ENCODE measurements at regions of chr14 and their contacts with region 1.

Region 1: DNA sequence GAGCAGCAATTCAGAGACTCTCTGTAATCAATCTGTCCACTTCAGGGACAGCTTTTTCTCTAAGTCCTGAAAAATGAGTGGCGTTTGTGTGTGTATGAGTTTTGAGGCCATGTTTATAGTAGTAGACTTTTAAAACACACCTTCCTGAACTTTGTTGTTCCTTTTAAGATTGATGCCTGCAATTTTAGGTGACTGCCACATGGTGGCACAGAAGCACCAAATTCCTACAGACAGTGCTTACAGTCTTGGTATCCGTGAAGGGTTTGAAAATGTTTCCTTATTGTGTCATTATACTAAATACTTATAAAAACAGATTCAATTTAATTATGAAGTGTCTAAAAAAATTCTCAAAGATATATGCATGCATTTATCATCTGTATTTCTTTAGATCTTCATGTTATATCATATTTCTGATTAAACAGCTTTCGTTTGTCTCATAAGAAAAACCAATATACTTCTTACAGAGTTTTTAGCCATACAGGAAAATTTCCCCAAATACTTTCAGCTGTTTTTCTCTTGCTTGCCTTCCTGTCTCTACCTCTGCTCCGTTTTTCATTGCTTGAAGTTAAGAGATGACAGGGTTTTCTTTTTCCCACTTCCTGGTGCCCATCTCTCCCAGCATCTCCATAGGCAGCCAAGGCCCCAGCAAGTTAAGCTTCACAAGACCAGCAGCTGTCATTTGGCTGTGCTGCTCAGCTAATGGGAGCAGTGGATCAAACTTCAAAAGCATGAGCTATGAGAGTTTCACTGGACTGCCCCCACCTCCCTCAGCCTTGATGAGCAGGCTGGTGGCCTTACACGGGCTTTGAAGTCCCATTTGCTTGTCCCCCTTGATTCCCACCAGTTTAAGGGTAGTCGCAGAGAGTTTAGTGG is 259.6 kb downstream of the AKAP6 start:
- DNase-seq: peak; percentile 10 to 20 (median 16)
- ATAC-seq: peak; percentile 54; the same call in 2 of the 3 replicates
- H3K4me3 ChIP-seq: no peak overlapping the region
- H3K27ac ChIP-seq: no peak overlapping the region
- H3K4me1 ChIP-seq: no peaks in the 10 kb centered on the region
- H3K27me3 ChIP-seq: no peaks in the 10 kb centered on the region
- CTCF ChIP-seq: peak; percentile 40 to 62 (median 58)
- EP300 ChIP-seq: no peak
- POLR2A ChIP-seq: no peak
- RAD21 ChIP-seq: peak; percentile 61 to 70

Region 2: GRCh38 chr14:32710731-32711680 is 122.3 kb after region 1 on chr14:
- CTCF ChIA-PET with region 1: no interaction called
- POLR2A ChIA-PET with region 1: no interaction called
- in situ Hi-C with region 1: no loop called
- intact Hi-C with region 1: loop called (anchors 10 kb)
- DNase-seq: peak; percentile 18 to 28 (median 19)
- ATAC-seq: 0 out of 3 replicates have a peak, but pooled peaks have one; percentile 43
- H3K4me3 ChIP-seq: no peak overlapping the region
- H3K27ac ChIP-seq: no peak overlapping the region
- H3K4me1 ChIP-seq: no peaks in the 10 kb centered on the region
- H3K27me3 ChIP-seq: no peaks in the 10 kb centered on the region; a peak in 1 of 5 replicates
- CTCF ChIP-seq: peak; percentile 14 to 54 (median 35); a peak in 3 of 6 replicates
- EP300 ChIP-seq: no peak
- POLR2A ChIP-seq: no peak
- RAD21 ChIP-seq: peak; percentile 29 to 64; a peak in 3 of 4 replicates

Region 3: DNA sequence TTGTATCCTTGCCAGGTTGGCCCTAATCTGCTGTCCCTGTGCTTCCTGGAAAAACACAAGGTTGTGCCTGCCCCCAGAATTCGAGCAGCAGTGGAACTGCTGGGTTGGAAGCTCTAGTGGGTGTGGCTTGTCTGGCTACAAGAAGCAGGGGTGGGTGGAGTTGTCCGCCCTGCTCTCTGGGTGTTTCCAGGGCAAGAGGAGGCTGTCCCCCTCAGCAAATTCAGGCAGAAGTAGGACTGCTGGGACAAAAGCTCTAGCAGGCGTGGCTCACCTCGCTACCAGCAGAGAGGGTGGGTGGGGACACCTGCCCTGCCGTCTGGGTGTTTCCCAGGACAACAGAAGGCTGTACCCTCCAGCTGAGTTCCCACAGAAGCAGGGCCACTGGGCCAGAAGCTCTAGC is 277.2 kb after region 1 on chr14:
- CTCF ChIA-PET with region 1: no interaction called
- POLR2A ChIA-PET with region 1: no interaction called
- in situ Hi-C with region 1: no loop called
- intact Hi-C with region 1: no loop called
- DNase-seq: no peak
- ATAC-seq: no peak
- H3K4me3 ChIP-seq: no peak overlapping the region
- H3K27ac ChIP-seq: no peak overlapping the region
- H3K4me1 ChIP-seq: no peaks in the 10 kb centered on the region
- H3K27me3 ChIP-seq: no peaks in the 10 kb centered on the region
- CTCF ChIP-seq: no peak
- EP300 ChIP-seq: no peak
- POLR2A ChIP-seq: no peak
- RAD21 ChIP-seq: no peak

Region 4: DNA sequence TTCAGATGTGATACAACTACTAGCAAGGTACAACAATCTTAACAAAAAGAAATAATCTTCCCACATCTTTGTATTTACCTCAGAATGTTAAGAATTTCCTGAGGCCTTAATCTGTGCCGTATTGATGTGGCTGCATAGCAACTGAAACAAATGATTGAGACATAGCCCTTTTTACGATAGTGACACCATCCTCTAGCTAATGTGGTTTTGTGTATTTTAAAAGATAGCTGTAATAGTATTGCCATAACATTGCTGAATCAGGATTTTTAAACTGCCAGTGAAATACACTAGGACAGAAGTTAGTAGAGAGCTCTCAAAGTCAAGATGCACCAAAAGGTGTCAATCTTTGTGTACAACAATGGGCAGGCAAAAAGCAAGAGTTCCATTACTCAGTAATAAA is 361.9 kb after region 1 on chr14:
- CTCF ChIA-PET with region 1: no interaction called
- POLR2A ChIA-PET with region 1: no interaction called
- in situ Hi-C with region 1: no loop called
- intact Hi-C with region 1: no loop called
- DNase-seq: no peak
- ATAC-seq: no peak
- H3K4me3 ChIP-seq: no peak overlapping the region
- H3K27ac ChIP-seq: no peak overlapping the region
- H3K4me1 ChIP-seq: no peaks in the 10 kb centered on the region
- H3K27me3 ChIP-seq: no peaks in the 10 kb centered on the region
- CTCF ChIP-seq: no peak
- EP300 ChIP-seq: no peak
- POLR2A ChIP-seq: no peak
- RAD21 ChIP-seq: no peak

Region 5: DNA sequence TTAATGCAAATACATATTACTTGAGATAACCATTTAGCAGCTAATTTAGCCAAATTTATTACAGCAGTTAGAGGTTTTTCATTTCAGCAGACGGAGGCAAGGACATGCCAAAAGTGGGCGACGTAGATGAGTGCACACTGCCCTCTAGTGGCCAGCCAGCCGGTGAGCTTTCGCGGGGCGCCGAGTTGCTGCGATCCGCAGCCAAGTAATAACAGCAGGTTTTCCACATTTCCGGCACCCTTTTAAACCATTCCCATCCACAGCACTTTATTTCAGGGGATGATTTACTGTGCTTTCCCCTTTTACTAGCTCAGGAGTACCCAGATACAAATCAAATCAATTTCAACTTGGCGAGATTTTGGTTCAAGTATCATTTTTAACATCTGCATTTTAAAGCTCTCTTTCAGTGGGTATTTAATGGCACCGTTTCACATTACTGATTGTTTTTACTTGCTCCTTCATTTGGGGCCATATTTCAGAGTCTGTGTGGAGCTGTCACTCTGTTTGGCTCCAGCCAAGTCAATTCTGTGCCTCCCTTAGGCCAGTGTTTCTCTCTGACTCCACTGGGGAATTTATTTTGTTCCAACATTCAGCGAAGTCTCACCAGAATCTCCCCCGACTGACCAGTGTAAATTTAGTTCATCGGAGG is 1204.2 kb after region 1 on chr14:
- CTCF ChIA-PET with region 1: no interaction called
- POLR2A ChIA-PET with region 1: no interaction called
- in situ Hi-C with region 1: loop called (anchors 25 kb)
- intact Hi-C with region 1: loop called (anchors 5 kb)
- DNase-seq: peak; percentile 69 to 77 (median 72)
- ATAC-seq: peak; percentile 93
- H3K4me3 ChIP-seq: no peak overlapping the region
- H3K27ac ChIP-seq: no peak overlapping the region
- H3K4me1 ChIP-seq: no peaks in the 10 kb centered on the region; a peak in 2 of 5 replicates
- H3K27me3 ChIP-seq: 0 out of 5 replicates have a peak, but pooled peaks cover 0 to 2% of the 10 kb centered on the region in 2 experiments
- CTCF ChIP-seq: peak; percentile 79 to 84 (median 79)
- EP300 ChIP-seq: no peak
- POLR2A ChIP-seq: no peak
- RAD21 ChIP-seq: peak; percentile 73 to 86

Region 6: GRCh38 chr14:34300882-34301734 is 1712.4 kb after region 1 on chr14:
- CTCF ChIA-PET with region 1: no interaction called
- POLR2A ChIA-PET with region 1: no interaction called
- in situ Hi-C with region 1: no loop called
- intact Hi-C with region 1: loop called (anchors 10 kb)
- DNase-seq: peak; percentile 28 to 52 (median 38)
- ATAC-seq: 0 out of 3 replicates have a peak, but pooled peaks have one; percentile 56
- H3K4me3 ChIP-seq: no peak overlapping the region
- H3K27ac ChIP-seq: no peak overlapping the region
- H3K4me1 ChIP-seq: no peaks in the 10 kb centered on the region
- H3K27me3 ChIP-seq: peaks cover 2 to 5% of the 10 kb centered on the region in 2 experiments; a peak in 2 of 5 replicates
- CTCF ChIP-seq: peak; percentile 38 to 68 (median 56); a peak in 5 of 6 replicates
- EP300 ChIP-seq: no peak
- POLR2A ChIP-seq: no peak
- RAD21 ChIP-seq: peak; percentile 64 to 74